ENCODE measurements at regions of chr20 and their contacts with region 1.

Region 1: GRCh38 chr20:52127309-52127708 is 64.3 kb downstream of the ZFP64 start:
- DNase-seq: no peak
- H3K4me3 ChIP-seq: no peak overlapping the region
- H3K4me3 Mint-ChIP-seq: no peak overlapping the region
- H3K27ac Mint-ChIP-seq: no peak overlapping the region
- H3K4me1 ChIP-seq: no peaks in the 10 kb centered on the region
- H3K4me1 Mint-ChIP-seq: no peaks in the 10 kb centered on the region
- H3K27me3 ChIP-seq: no peaks in the 10 kb centered on the region
- H3K27me3 Mint-ChIP-seq: peaks cover 6% of the 10 kb centered on the region
- CTCF ChIP-seq: no peak

Region 2: GRCh38 chr20:52145587-52145986 is 18.3 kb after region 1 on chr20:
- CTCF ChIA-PET with region 1: interaction called, 60 read pairs
- POLR2A ChIA-PET with region 1: no interaction called
- intact Hi-C with region 1: loop called (anchors 1 kb)
- DNase-seq: no peak
- H3K4me3 ChIP-seq: no peak overlapping the region
- H3K4me3 Mint-ChIP-seq: no peak overlapping the region
- H3K27ac Mint-ChIP-seq: no peak overlapping the region
- H3K4me1 ChIP-seq: peaks cover 3% of the 10 kb centered on the region; the same call in 1 of the 2 replicates
- H3K4me1 Mint-ChIP-seq: no peaks in the 10 kb centered on the region
- H3K27me3 ChIP-seq: no peaks in the 10 kb centered on the region
- H3K27me3 Mint-ChIP-seq: no peaks in the 10 kb centered on the region
- CTCF ChIP-seq: no peak

Region 3: DNA sequence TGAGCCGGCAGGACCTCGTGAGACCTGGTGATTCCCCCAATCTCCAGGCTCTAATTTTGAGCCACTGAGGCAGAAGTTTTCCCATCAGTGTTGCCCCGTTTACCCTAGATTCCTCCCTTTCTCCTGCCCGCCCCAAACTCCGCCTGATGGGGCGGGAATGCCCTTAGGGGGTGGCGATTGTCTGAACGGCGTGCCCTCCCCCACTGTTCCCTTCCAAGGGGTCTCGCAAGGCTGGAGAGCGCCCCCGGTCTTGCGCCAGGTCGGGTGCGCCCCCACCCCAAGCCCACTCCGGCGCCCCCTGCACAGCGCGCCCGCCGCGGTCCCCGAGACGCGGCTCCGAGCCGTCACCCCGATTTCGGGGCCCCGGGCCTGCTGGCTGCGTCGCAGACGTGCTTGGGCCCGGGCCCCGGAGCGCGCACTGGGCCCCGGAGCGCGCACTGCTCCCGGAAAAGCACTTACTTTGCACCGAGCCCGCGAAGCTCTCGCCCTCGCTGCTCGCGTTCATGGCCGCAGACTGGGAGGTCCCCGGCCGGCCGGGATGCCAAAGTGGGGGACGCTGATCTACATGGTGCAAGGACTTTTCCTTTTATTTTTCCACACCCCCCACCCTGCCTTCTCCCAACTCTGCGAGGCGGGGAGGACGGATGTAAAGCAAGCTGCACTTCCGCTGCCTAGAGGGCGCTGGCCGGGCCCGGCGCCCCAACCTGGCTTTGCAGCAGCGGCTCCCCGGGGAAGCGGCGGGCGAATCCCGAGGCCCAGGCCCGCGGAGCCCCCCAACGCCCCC is 64.0 kb after region 1 on chr20 and contains the start of gene ZFP64:
- CTCF ChIA-PET with region 1: interaction called, 22 read pairs
- POLR2A ChIA-PET with region 1: no interaction called
- intact Hi-C with region 1: loop called (anchors 5 kb)
- DNase-seq: peak; percentile 90 to 92
- H3K4me3 ChIP-seq: peak within 1 kb of the TSS; percentile 97
- H3K4me3 Mint-ChIP-seq: peak within 1 kb of the TSS; percentile 85
- H3K27ac Mint-ChIP-seq: peak within 1 kb of the TSS; percentile 55
- H3K4me1 ChIP-seq: 0 out of 2 replicates have a peak, but pooled peaks cover 7% of the 10 kb centered on the region
- H3K4me1 Mint-ChIP-seq: peaks cover 21% of the 10 kb centered on the region
- H3K27me3 ChIP-seq: no peaks in the 10 kb centered on the region
- H3K27me3 Mint-ChIP-seq: no peaks in the 10 kb centered on the region
- CTCF ChIP-seq: peak; percentile 82 to 98
- total RNA-seq, gene ZFP64: 25.4 and 25.6 TPM in 2 replicates

Region 4: DNA sequence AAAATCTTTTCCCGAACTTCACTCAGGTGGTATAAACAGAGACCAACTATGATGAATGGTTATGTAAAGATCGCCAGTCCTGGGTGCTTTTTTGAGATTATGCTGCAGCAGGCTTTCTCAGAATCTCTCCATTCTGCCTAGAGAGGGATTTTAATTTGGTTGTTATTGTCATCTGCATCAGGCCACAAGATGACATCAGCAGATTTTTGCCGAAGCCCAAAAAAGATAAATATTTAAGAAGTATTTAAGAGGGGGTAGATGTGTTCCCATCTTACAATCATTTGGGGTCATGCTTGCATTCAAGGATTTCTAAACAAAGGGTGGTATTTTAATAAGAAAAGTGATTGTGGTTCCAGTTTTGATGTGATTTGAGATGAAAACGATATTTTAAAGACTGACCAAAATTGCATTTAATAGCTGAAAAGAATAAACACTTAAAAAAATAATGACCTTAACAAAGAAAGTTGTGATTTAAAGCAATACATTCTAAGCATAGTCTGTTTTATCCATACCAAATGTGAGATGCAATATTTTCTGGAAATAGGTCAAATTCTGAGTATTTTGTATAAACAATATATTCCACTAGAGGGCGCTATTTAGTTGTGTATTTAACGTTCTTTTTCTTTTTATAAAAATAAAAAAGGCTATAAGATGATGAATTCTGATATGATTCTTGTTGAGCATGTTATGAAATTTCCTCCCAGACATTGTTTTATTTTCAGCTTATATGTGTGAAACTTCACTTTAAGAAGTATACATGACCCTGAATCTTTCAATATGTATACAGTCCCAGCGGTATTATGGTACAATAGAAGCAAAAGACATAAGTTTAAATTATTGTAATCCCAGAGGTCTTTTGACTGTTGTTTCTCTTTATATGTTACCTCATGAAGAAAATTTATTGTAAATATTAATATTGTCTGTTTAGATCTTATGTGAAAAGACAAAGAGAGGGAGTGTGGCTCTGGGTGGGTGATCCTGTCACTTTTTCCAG is 115.2 kb after region 1 on chr20:
- CTCF ChIA-PET with region 1: interaction called, 3 read pairs
- POLR2A ChIA-PET with region 1: no interaction called
- intact Hi-C with region 1: loop called (anchors 1 kb)
- DNase-seq: no peak
- H3K4me3 ChIP-seq: no peak overlapping the region
- H3K4me3 Mint-ChIP-seq: no peak overlapping the region
- H3K27ac Mint-ChIP-seq: no peak overlapping the region
- H3K4me1 ChIP-seq: no peaks in the 10 kb centered on the region
- H3K4me1 Mint-ChIP-seq: no peaks in the 10 kb centered on the region
- H3K27me3 ChIP-seq: no peaks in the 10 kb centered on the region
- H3K27me3 Mint-ChIP-seq: peaks cover 6% of the 10 kb centered on the region
- CTCF ChIP-seq: peak; percentile 43 to 94

Region 5: DNA sequence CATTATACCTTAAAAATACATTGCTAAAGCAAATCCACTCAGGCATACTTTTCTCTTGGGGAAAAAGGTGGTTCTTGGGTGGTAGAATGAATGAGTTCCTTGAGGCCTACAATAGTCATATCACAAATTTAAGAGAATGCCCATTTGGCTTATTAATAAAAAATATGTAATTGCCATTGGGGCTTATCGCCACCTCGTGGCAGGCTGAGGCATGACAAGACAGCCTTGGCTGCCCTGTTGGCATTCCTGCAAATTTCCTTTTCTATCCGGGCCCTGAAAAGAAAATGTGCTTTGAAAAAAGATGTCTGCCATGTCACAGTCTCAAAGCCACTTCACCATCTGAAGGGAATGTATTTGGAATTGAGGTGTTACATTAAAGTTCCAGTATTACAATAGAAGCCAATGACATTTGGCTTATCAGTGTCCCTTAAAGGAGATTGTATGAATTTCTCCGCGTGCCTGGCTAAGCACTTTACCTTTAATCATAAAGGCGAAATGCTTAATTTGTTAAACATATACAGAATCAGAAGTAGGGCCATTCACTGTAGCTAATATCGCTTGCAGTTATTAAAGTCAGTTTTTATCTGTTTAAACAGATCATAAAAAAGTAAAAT is 252.5 kb after region 1 on chr20:
- CTCF ChIA-PET with region 1: no interaction called
- POLR2A ChIA-PET with region 1: no interaction called
- intact Hi-C with region 1: loop called (anchors 1 kb)
- DNase-seq: peak in 1 of 2 experiments; percentile 80
- H3K4me3 ChIP-seq: no peak overlapping the region
- H3K4me3 Mint-ChIP-seq: no peak overlapping the region
- H3K27ac Mint-ChIP-seq: no peak overlapping the region
- H3K4me1 ChIP-seq: no peaks in the 10 kb centered on the region
- H3K4me1 Mint-ChIP-seq: no peaks in the 10 kb centered on the region
- H3K27me3 ChIP-seq: no peaks in the 10 kb centered on the region
- H3K27me3 Mint-ChIP-seq: peaks cover 19% of the 10 kb centered on the region
- CTCF ChIP-seq: peak; percentile 99 to 100